Activated CD4-positive, alpha-beta T cell treated with anti-CD3 and anti-CD28 coated beads for 36 hours (primary cell): ENCODE measurements at regions of chr3 and their contacts with region 1.

Region 1: DNA sequence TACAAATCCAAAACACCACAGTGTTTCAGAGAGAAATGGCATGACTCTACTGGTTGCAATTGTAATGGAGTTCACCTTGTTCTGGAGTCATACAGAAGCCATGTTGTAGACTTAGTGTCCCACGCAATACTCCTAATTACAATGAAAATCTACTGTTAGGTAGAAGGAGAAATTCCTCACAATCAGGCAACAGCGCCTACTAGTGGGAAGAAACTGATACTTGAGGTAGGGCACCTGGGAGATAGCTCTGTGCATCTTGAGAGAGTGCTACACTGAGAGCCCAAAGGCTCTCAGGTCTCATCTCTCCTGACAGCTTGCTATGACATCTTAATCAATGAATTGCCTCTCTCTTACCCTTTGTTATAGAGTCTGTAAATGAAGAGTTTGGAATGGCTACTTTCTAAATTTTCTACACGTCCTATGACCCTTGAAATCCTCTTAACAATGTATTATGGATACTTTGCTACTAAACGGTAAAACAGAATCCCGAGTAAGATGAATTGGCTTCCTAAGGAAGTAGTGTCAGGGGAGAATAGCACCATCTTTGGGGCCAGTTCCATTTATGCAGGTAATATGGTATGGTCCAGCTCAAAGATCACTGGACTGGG is 422.7 kb upstream of the TPRG1 start:
- DNase-seq: peak; percentile 59
- ATAC-seq: no peak
- H3K4me3 Mint-ChIP-seq: no peak overlapping the region
- H3K27ac Mint-ChIP-seq: no peak overlapping the region
- H3K4me1 Mint-ChIP-seq: peaks cover 30% of the 10 kb centered on the region
- H3K27me3 Mint-ChIP-seq: no peaks in the 10 kb centered on the region

Region 2: GRCh38 chr3:188309437-188310269 is 439.5 kb before region 1 on chr3:
- CTCF ChIA-PET with region 1: no interaction called
- POLR2A ChIA-PET with region 1: no interaction called
- intact Hi-C with region 1: loop called in 1 of 2 experiments (anchors 5 kb)
- DNase-seq: peak; percentile 50
- ATAC-seq: peak; percentile 85
- H3K4me3 Mint-ChIP-seq: peak overlapping the region; percentile 9
- H3K27ac Mint-ChIP-seq: peak overlapping the region; percentile 80
- H3K4me1 Mint-ChIP-seq: peaks cover 26% of the 10 kb centered on the region
- H3K27me3 Mint-ChIP-seq: no peaks in the 10 kb centered on the region

Region 3: DNA sequence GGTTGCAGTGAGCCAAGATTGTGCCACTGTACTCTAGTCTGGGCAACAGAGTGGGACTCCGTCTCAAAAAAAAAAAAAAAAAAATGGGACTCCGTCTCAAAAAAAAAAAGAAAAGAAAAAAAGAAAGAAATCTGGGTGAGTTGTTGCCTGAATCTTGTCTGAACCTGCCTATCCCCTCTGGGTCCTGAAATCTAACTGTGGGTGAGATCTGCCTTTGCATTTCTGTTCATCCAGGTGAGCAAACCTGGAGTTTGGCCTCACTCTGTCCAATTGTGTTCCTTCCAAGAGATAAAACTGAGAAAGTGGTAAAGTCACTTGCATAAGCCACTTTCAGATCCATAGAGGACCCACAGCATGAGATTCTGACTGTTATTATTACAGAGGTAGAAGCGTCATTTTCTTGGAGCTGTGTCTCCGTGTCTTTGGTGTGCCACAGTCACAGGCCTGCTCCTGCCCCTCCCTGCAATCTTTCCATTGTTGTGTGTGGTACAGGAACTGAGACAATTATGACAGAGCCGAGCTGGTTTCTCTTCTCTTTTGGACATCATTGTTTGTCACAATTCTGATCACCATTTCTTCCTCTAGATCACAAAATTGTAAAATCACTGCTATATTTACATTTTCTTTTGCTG is 359.3 kb before region 1 on chr3:
- CTCF ChIA-PET with region 1: no interaction called
- POLR2A ChIA-PET with region 1: no interaction called
- intact Hi-C with region 1: loop called in 1 of 2 experiments (anchors 5 kb)
- DNase-seq: peak; percentile 81
- ATAC-seq: peak; percentile 92
- H3K4me3 Mint-ChIP-seq: peak overlapping the region; percentile 22
- H3K27ac Mint-ChIP-seq: peak overlapping the region; percentile 78
- H3K4me1 Mint-ChIP-seq: peaks cover 41% of the 10 kb centered on the region
- H3K27me3 Mint-ChIP-seq: no peaks in the 10 kb centered on the region

Region 4: GRCh38 chr3:188720636-188721035 is 28.5 kb before region 1 on chr3:
- CTCF ChIA-PET with region 1: interaction called, 3 read pairs
- POLR2A ChIA-PET with region 1: no interaction called
- intact Hi-C with region 1: loop called (anchors 1 to 2 kb)
- DNase-seq: no peak
- ATAC-seq: peak; percentile 83
- H3K4me3 Mint-ChIP-seq: no peak overlapping the region
- H3K27ac Mint-ChIP-seq: no peak overlapping the region
- H3K4me1 Mint-ChIP-seq: peaks cover 37% of the 10 kb centered on the region
- H3K27me3 Mint-ChIP-seq: peaks cover 9% of the 10 kb centered on the region

Region 5: DNA sequence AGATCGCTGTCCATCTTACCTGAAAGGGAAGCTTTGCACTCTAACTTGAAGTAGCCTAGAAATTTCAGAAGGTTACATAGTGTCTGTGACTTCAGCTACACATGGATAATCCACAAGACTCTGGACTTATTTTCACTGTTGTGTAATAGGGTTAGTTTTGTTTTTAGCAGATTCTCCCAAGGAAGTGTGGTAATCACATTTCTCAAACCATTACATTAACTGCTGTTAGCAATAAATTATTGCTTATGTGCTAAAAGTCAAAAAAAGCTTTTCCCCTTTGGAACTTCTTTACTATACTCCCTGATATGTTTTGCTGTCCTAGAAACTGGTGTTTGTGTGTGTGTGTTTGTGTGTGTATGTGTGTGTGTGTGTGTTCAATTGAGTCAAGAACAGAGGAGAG is 70.8 kb after region 1 on chr3:
- CTCF ChIA-PET with region 1: no interaction called
- POLR2A ChIA-PET with region 1: no interaction called
- intact Hi-C with region 1: no loop called
- DNase-seq: no peak
- ATAC-seq: no peak
- H3K4me3 Mint-ChIP-seq: no peak overlapping the region
- H3K27ac Mint-ChIP-seq: no peak overlapping the region
- H3K4me1 Mint-ChIP-seq: no peaks in the 10 kb centered on the region
- H3K27me3 Mint-ChIP-seq: no peaks in the 10 kb centered on the region

Region 6: DNA sequence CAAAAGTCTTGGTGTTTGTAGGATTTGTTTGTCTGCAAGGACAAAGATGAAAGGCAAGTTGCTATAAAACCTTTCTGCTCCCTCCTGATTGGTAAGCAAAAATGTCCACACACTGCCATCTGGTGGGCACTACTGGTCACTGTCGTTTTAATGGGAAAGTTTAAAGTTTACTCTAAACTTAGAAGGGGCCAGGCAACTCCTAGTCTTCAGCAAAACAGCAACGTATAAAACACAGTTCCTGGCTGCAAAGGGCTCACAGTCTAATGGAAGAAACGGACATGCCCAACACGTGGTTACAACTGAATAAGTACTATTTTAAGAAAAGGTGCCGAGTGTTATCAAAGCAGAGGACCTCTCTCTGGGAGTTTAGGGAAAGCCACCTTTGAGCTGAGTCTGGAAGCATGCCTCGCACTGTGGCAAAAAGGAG is 399.0 kb after region 1 on chr3:
- CTCF ChIA-PET with region 1: no interaction called
- POLR2A ChIA-PET with region 1: no interaction called
- intact Hi-C with region 1: loop called in 1 of 2 experiments (anchors 10 kb)
- DNase-seq: peak; percentile 81
- ATAC-seq: peak; percentile 66
- H3K4me3 Mint-ChIP-seq: no peak overlapping the region
- H3K27ac Mint-ChIP-seq: no peak overlapping the region
- H3K4me1 Mint-ChIP-seq: peaks cover 17% of the 10 kb centered on the region
- H3K27me3 Mint-ChIP-seq: peaks cover 3% of the 10 kb centered on the region